B cell (primary cell): ENCODE measurements at regions of chr20 and their contacts with region 1.

Region 1: GRCh38 chr20:33810885-33811777 is at the start of gene CHMP4B:
- DNase-seq: peak; percentile 98
- ATAC-seq: peak; percentile 96
- H3K4me3 ChIP-seq: peak within 1 kb of the TSS; percentile 86 to 97 (median 92)
- H3K4me3 Mint-ChIP-seq: peak within 1 kb of the TSS; percentile 97
- H3K27ac ChIP-seq: peak within 1 kb of the TSS; percentile 65 to 90
- H3K27ac Mint-ChIP-seq: peak within 1 kb of the TSS; percentile 96
- H3K4me1 ChIP-seq: peaks cover 23 to 30% of the 10 kb centered on the region in 2 donors
- H3K4me1 Mint-ChIP-seq: peaks cover 45% of the 10 kb centered on the region
- H3K27me3 ChIP-seq: no peaks in the 10 kb centered on the region
- H3K27me3 Mint-ChIP-seq: peaks cover 4% of the 10 kb centered on the region
- CTCF ChIP-seq: no peak
- total RNA-seq, gene CHMP4B: 81.6 and 83.9 TPM in 2 replicates

Region 2: DNA sequence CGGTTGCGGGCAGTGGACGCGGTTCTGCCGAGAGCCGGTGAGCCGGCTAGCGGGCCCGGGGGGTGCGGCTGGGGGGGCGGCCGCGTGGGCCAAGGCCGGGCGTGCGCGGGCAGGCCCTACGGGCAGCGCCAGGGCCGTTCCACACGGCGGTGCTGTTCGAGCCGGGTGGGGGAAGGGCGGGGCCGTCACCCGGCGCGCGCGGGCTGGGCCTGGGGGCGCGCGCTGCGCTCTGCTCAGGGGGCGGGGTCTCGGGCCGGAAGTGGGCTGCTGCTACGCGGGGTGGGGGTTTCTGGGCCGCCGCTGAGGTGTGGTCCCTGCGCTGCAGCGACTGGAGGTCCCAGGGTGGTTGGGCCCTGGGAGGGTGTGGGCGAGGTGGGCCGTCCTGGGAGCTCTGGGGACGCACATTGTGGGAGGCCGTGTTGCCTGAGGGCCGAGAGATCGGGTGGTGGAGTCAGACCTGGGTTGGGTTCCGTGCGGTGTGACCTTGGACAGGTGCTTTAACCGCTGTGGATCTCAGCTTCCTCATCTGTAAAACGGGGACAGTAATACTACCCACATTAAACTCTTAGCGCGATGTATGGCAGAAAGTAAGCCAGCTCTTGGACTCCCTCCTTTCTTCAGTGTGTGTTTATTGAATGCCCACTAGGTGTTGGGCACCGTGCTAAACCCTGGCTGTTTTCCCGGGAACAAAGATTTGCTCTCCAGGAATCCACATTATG is 991.0 kb before region 1 on chr20:
- CTCF ChIA-PET with region 1: no interaction called
- POLR2A ChIA-PET with region 1: interaction called, 3 read pairs
- intact Hi-C with region 1: loop called (anchors 10 kb)
- DNase-seq: peak; percentile 93
- ATAC-seq: peak; percentile 72
- H3K4me3 ChIP-seq: peak overlapping the region; percentile 66 to 92 (median 77)
- H3K4me3 Mint-ChIP-seq: peak overlapping the region; percentile 98
- H3K27ac ChIP-seq: peak overlapping the region; percentile 89 to 93
- H3K27ac Mint-ChIP-seq: peak overlapping the region; percentile 98
- H3K4me1 ChIP-seq: peaks cover 21% of the 10 kb centered on the region in 2 donors
- H3K4me1 Mint-ChIP-seq: peaks cover 39% of the 10 kb centered on the region
- H3K27me3 ChIP-seq: no peaks in the 10 kb centered on the region
- H3K27me3 Mint-ChIP-seq: no peaks in the 10 kb centered on the region
- CTCF ChIP-seq: no peak

Region 3: DNA sequence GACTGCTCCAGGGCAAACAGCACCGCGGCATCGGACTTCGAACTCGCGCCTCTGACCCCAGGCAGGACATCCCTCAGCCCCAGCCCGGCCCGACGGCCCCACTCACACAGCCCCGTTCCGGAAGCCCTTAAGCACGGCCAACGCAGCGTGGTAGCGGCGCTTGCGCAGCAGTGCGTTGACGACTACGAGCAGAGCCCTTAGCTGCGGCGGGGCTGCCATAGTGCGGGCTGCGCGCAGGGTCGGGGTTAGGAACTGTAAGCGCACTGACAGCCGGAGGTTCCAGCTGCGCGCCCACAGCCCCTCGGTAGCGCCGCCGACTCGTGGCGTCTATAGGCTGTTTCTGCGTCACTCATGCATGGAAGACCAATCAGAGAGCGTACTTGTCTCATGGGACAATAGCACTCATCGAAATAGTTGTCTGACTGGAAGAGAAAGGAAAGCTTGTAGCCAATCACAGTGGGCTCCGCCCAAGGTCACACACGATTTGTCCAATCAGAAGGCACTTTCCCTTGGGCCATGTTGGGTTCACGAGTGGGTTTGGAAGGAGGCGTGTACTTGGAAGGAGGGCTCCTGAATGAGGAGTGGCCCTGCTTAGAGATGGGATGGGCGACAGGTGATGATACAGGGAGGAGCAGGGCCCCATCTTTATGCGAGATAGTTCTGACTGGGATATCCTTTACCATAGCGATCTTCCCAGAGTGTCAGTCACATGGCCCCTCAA is 91.0 kb before region 1 on chr20 and contains the start of gene PXMP4:
- CTCF ChIA-PET with region 1: interaction called, 6 read pairs
- POLR2A ChIA-PET with region 1: interaction called, 3 read pairs
- intact Hi-C with region 1: loop called (anchors 1 kb)
- DNase-seq: peak; percentile 93
- ATAC-seq: peak; percentile 97
- H3K4me3 ChIP-seq: peak within 1 kb of the TSS; percentile 36 to 90 (median 85)
- H3K4me3 Mint-ChIP-seq: peak within 1 kb of the TSS; percentile 90
- H3K27ac ChIP-seq: peak within 1 kb of the TSS; percentile 43 to 53
- H3K27ac Mint-ChIP-seq: peak within 1 kb of the TSS; percentile 85
- H3K4me1 ChIP-seq: peaks cover 8 to 16% of the 10 kb centered on the region in 2 donors
- H3K4me1 Mint-ChIP-seq: peaks cover 14% of the 10 kb centered on the region
- H3K27me3 ChIP-seq: no peaks in the 10 kb centered on the region
- H3K27me3 Mint-ChIP-seq: no peaks in the 10 kb centered on the region
- CTCF ChIP-seq: no peak
- total RNA-seq, gene PXMP4: 6.6 and 6.8 TPM in 2 replicates

Region 4: GRCh38 chr20:33781133-33781532 is 30.0 kb before region 1 on chr20:
- CTCF ChIA-PET with region 1: interaction called, 6 read pairs
- POLR2A ChIA-PET with region 1: interaction called, 7 read pairs
- intact Hi-C with region 1: loop called (anchors 1 kb)
- DNase-seq: no peak
- ATAC-seq: no peak
- H3K4me3 ChIP-seq: no peak overlapping the region
- H3K4me3 Mint-ChIP-seq: peak overlapping the region; percentile 42
- H3K27ac ChIP-seq: peak overlapping the region; percentile 95 to 97
- H3K27ac Mint-ChIP-seq: peak overlapping the region; percentile 93
- H3K4me1 ChIP-seq: peaks cover 75 to 93% of the 10 kb centered on the region in 2 donors
- H3K4me1 Mint-ChIP-seq: peaks cover 74% of the 10 kb centered on the region
- H3K27me3 ChIP-seq: no peaks in the 10 kb centered on the region
- H3K27me3 Mint-ChIP-seq: no peaks in the 10 kb centered on the region
- CTCF ChIP-seq: no peak

Region 5: DNA sequence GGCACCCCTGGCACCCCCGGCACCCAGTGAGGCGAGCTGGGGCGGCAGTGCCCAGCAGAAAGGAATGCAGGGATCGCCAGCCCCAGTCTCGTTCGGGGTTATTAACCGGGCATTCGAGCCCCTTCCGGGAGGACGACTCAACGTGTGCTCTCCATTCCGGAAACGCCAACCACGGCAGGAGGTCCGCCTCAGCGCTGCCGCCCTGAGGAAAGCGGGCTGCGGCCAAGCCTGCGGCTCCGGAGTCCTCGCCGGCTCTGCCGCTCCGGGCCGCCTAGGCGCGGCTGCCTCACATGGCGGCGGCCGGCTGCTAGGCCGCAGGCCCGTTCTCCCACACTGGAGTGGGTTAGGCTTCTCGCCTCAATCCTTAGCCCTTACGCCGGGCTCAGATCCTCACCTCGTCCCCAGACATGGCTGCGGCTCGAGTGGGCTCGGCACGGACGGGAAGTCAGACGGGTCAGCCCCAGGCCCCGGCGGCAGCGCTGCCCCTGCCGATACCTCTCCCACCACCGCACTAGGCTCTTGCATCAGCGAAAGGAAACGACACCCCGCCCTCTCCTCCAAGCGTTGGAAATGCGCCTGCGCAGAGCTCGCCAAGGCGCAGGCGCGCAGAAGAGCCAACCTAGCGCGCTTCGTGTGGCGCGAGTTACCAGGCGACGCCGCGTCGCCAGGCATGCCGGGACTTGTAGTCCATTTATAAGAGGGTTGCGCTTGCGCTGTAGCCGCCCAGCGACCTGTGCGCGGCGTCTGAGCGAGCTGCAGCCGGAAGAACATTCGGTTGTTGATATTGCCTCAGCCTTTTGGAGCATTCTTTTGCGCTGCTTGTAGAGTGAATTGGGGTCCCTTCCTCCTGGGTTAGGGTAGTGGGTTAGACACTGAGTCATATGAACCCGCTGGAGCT is 300.8 kb after region 1 on chr20 and contains the start of gene EIF2S2:
- CTCF ChIA-PET with region 1: no interaction called
- POLR2A ChIA-PET with region 1: interaction called, 3 read pairs
- intact Hi-C with region 1: loop called (anchors 1 kb)
- DNase-seq: peak; percentile 99
- ATAC-seq: peak; percentile 91
- H3K4me3 ChIP-seq: peak within 1 kb of the TSS; percentile 63 to 97 (median 90)
- H3K4me3 Mint-ChIP-seq: peak within 1 kb of the TSS; percentile 99
- H3K27ac ChIP-seq: peak within 1 kb of the TSS; percentile 80 to 95
- H3K27ac Mint-ChIP-seq: peak within 1 kb of the TSS; percentile 99
- H3K4me1 ChIP-seq: peaks cover 21 to 28% of the 10 kb centered on the region in 2 donors
- H3K4me1 Mint-ChIP-seq: peaks cover 45% of the 10 kb centered on the region
- H3K27me3 ChIP-seq: no peaks in the 10 kb centered on the region
- H3K27me3 Mint-ChIP-seq: no peaks in the 10 kb centered on the region
- CTCF ChIP-seq: no peak
- total RNA-seq, gene EIF2S2: 26.4 and 27.7 TPM in 2 replicates